Activated CD8-positive, alpha-beta T cell treated with anti-CD3 and anti-CD28 coated beads for 36 hours (primary cell): ENCODE measurements at regions of chr4 and their contacts with region 1.

Region 1: DNA sequence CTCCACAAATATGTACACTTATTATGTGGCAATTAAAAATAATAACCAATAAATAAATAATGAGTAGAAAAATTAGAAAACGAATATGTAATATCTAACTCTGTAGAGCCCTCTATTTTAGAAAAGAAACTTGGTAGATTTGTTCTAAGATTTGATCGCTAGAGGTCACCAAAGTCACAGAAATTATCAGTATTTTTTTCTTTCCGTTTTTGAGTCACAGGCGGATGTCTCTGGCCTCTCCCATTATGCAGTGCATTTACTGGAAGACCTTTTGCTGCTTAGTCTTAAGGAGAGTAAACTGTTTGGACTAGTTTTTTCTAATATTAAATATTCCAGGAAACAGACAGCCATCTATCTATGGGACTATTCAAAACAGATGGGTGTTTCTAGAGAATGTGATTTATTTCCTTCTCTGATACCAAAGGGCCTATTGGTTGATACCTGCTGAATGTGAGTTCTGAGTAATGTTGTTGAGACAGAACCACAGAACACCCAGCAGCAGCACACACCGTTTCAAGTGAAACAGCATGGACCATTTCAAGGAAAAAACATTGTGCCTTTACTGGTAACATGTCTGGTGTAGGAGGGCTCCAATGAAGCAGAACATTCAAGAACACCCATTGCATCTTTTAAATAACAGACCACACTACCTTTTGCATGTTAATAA is 34.0 kb upstream of the GYPA start:
- DNase-seq: peak; percentile 28
- ATAC-seq: peak; percentile 87
- H3K4me3 Mint-ChIP-seq: no peak overlapping the region
- H3K27ac Mint-ChIP-seq: peak overlapping the region; percentile 10
- H3K4me1 Mint-ChIP-seq: peaks cover 16% of the 10 kb centered on the region
- H3K27me3 Mint-ChIP-seq: no peaks in the 10 kb centered on the region
- CTCF ChIP-seq: peak; percentile 66

Region 2: DNA sequence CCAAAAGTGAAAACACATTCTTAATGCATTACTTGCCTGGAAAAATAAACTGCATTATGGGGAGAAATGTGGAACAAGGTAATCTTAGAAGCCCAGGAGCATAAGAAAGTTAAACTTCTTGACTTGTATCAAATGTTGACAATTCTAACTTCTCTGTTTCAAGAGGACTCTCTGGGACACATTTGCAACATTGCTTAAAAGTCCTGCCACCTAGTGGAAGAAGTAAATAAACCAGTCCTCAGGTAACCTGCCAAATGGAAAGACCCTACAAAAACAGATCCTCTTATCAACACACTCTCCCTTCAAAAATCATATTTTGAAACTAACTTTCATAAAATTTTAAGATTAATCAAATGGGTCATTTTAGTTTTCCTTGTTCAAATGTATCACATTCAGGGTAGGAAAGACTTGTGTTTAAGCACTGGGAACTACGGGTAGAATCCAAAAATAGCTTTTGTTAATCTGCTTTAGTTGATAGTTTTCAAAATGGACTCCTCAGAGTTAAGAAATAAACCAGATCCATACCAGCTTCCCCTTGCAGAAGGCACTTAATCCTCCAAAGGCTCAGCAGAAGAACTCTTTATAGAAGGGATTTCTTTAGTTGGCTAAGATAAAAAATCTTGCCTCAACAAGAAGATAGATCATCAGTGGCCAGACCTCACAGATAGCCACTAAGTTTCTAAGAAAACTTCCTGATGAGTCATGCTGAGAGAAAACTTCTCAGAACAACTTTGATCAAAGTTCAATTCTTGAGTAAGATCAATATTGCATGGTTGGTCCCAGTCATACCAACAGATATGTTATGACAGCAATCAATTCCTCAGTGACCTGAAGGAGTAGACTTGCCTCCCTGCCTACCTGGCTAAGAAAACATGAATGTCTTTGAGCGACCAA is 613.1 kb after region 1 on chr4:
- CTCF ChIA-PET with region 1: interaction called, 3 read pairs
- POLR2A ChIA-PET with region 1: no interaction called
- intact Hi-C with region 1: loop called (anchors 10 kb)
- DNase-seq: no peak
- ATAC-seq: no peak
- H3K4me3 Mint-ChIP-seq: no peak overlapping the region
- H3K27ac Mint-ChIP-seq: no peak overlapping the region
- H3K4me1 Mint-ChIP-seq: no peaks in the 10 kb centered on the region
- H3K27me3 Mint-ChIP-seq: peaks cover 4% of the 10 kb centered on the region
- CTCF ChIP-seq: no peak

Region 3: GRCh38 chr4:145061318-145061920 is 886.9 kb after region 1 on chr4:
- CTCF ChIA-PET with region 1: interaction called, 13 read pairs
- POLR2A ChIA-PET with region 1: no interaction called
- intact Hi-C with region 1: loop called (anchors 5 kb)
- DNase-seq: no peak
- ATAC-seq: peak; percentile 62
- H3K4me3 Mint-ChIP-seq: no peak overlapping the region
- H3K27ac Mint-ChIP-seq: no peak overlapping the region
- H3K4me1 Mint-ChIP-seq: peaks cover 29% of the 10 kb centered on the region
- H3K27me3 Mint-ChIP-seq: no peaks in the 10 kb centered on the region
- CTCF ChIP-seq: peak; percentile 75